PC-3 (cell line): ENCODE measurements at regions of chr11 and their contacts with region 1.

Region 1: DNA sequence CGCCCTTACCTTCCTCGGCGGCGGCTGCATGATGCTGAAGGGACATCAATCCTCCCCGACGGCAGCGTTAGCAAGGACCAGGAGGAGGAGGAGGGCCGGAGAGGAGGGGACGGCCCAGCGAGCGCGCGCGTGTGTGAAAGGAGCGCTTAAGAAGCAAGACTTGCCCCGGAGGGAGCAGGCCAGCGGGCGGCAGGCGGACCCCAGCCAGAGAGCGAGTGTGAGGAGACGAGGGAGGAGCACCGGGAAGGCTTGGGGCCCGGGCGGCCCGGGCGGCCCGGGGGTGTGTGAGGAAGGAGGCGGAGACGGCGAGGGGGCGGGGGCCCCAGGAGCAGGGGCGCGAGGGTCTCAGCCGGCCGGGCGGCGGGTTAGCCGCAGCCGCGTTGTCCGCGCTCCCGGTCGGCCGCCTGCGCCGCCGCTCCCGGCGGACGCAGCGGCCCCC is 251 bp downstream of the FCHSD2 start:
- DNase-seq: peak; percentile 62
- ATAC-seq: peak; percentile 44
- H3K4me3 ChIP-seq: peak overlapping the region; percentile 87
- H3K27ac ChIP-seq: peak overlapping the region; percentile 70
- H3K4me1 ChIP-seq: peaks cover 20% of the 10 kb centered on the region
- H3K27me3 ChIP-seq: no peaks in the 10 kb centered on the region
- CTCF ChIP-seq: no peak

Region 2: GRCh38 chr11:72924568-72925190 is 217.2 kb before region 1 on chr11:
- CTCF ChIA-PET with region 1: interaction called, 8 read pairs
- POLR2A ChIA-PET with region 1: no interaction called
- intact Hi-C with region 1: loop called (anchors 2 kb)
- DNase-seq: peak; percentile 65
- ATAC-seq: peak; percentile 73
- H3K4me3 ChIP-seq: no peak overlapping the region
- H3K27ac ChIP-seq: no peak overlapping the region
- H3K4me1 ChIP-seq: no peaks in the 10 kb centered on the region
- H3K27me3 ChIP-seq: no peaks in the 10 kb centered on the region
- CTCF ChIP-seq: peak; percentile 85

Region 3: GRCh38 chr11:72975778-72976521 is 165.9 kb before region 1 on chr11:
- CTCF ChIA-PET with region 1: no interaction called
- POLR2A ChIA-PET with region 1: no interaction called
- intact Hi-C with region 1: loop called (anchors 5 kb)
- DNase-seq: peak; percentile 85
- ATAC-seq: peak; percentile 91
- H3K4me3 ChIP-seq: no peak overlapping the region
- H3K27ac ChIP-seq: peak overlapping the region; percentile 58
- H3K4me1 ChIP-seq: peaks cover 14% of the 10 kb centered on the region
- H3K27me3 ChIP-seq: no peaks in the 10 kb centered on the region
- CTCF ChIP-seq: no peak

Region 4: GRCh38 chr11:73170140-73170539 is 28.3 kb after region 1 on chr11:
- CTCF ChIA-PET with region 1: no interaction called
- POLR2A ChIA-PET with region 1: interaction called, 12 read pairs
- intact Hi-C with region 1: no loop called
- DNase-seq: no peak
- ATAC-seq: peak; percentile 39
- H3K4me3 ChIP-seq: no peak overlapping the region
- H3K27ac ChIP-seq: no peak overlapping the region
- H3K4me1 ChIP-seq: peaks cover 8% of the 10 kb centered on the region
- H3K27me3 ChIP-seq: no peaks in the 10 kb centered on the region
- CTCF ChIP-seq: no peak

Region 5: DNA sequence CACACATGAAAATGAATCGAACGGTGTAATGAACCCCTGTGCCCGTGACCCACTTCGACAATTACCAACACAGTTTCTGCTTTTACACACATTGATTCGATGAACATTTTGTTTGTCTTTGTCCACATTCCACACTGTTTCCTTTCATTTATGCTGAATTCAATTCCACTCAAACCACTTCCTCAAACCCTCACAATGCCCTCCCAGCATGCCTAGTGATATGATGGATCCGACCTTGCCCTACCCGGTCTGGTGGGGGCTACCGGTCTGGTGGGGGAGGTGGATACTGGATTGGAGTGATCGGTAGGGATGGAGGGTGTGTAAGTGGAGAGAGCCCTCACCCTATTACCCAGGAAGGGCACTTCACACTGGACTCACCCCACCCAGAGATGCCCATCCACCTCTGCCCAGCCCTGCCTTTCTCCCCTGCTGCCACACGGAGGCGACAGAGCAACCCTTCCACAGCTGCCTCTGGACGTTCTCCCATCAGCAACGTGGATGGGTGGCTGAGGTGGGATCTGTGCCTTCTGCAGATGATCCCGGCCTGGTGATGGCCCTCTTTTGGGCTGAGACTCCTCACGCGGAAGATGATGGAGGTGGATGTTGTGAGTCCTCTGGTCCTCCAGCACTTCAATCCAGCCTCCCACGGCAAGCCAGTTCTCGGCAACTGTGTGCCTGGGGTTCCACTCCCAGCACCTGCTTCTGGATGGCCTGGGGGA is 43.2 kb after region 1 on chr11:
- CTCF ChIA-PET with region 1: no interaction called
- POLR2A ChIA-PET with region 1: no interaction called
- intact Hi-C with region 1: no loop called
- DNase-seq: peak; percentile 95
- ATAC-seq: peak; percentile 57
- H3K4me3 ChIP-seq: peak overlapping the region; percentile 44
- H3K27ac ChIP-seq: peak overlapping the region; percentile 95
- H3K4me1 ChIP-seq: peaks cover 43% of the 10 kb centered on the region
- H3K27me3 ChIP-seq: no peaks in the 10 kb centered on the region
- CTCF ChIP-seq: peak; percentile 98